ENCODE measurements at regions of chr2 and their contacts with region 1.

Region 1: DNA sequence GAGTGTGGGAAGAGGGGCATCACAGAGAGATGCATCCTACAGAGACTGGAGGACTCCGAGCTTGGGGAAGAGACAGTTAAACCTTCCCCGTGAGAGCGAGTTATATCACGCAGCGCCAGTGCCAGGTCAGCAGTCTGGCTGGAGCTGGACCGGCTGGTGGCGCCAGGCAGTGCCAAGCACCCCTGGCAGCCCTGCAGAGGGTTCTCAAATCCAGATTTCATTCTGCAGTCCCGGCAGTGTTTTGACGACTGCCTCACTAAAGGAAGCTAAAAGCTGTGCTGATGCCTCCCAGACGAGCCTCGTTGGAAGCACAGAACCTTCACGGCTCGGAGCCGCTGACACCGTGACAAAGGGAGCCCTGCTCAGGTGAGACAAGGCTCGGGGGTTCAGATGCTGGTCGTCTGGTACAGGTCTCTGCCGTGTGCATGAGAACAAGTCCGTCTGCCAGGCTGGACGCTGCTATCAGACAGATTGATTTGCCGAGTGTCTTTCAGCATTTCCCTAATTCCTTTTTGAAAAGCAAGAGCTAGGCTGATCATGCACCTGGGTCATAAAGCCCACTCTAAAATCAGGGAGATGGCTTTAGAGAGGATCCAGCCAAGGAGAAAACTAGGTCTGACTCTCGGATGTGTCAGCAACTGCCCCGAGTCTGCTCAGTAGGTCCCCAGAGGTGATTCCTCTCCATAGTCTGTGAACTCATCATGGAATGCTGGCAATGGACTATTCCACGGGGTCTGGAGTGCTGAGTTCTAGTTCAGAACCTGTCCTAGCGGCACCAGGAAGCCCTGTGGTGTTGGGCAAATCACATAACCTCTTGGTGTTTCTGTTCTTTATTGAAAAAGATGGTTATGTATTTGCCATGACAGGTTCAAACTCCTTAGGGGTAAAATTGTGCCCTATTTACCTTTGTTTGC is 240.6 kb downstream of the SOX11 start:
- DNase-seq: no peak
- H3K4me3 ChIP-seq: no peak overlapping the region
- H3K4me3 Mint-ChIP-seq: no peak overlapping the region
- H3K27ac Mint-ChIP-seq: no peak overlapping the region
- H3K4me1 ChIP-seq: no peaks in the 10 kb centered on the region
- H3K4me1 Mint-ChIP-seq: peaks cover 12% of the 10 kb centered on the region
- H3K27me3 ChIP-seq: no peaks in the 10 kb centered on the region
- H3K27me3 Mint-ChIP-seq: no peaks in the 10 kb centered on the region
- CTCF ChIP-seq: no peak

Region 2: GRCh38 chr2:5618271-5618670 is 314.5 kb before region 1 on chr2:
- CTCF ChIA-PET with region 1: no interaction called
- POLR2A ChIA-PET with region 1: no interaction called
- intact Hi-C with region 1: no loop called
- DNase-seq: no peak
- H3K4me3 ChIP-seq: no peak overlapping the region
- H3K4me3 Mint-ChIP-seq: no peak overlapping the region
- H3K27ac Mint-ChIP-seq: no peak overlapping the region
- H3K4me1 ChIP-seq: no peaks in the 10 kb centered on the region
- H3K4me1 Mint-ChIP-seq: no peaks in the 10 kb centered on the region
- H3K27me3 ChIP-seq: no peaks in the 10 kb centered on the region; the same call in 1 of the 2 replicates
- H3K27me3 Mint-ChIP-seq: peaks cover 8% of the 10 kb centered on the region
- CTCF ChIP-seq: no peak

Region 3: DNA sequence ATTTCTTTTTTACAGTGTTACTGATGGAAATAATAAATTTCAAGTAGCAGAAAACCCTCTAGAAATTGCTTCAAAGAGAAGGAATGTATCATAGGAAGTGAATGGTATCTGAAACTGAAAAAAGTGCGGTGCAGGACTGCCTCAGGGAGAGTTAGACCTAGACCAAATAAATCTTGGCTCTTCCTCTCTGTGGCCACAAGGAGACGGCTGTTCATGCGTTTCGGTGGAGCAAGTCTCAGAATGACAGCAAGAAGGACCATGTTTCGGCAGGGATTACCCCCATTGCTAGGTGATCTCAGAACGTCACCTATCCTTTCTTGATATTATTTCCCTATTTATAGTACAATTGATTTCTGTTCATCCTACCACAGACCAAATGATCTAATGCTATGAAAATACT is 281.7 kb after region 1 on chr2:
- CTCF ChIA-PET with region 1: no interaction called
- POLR2A ChIA-PET with region 1: no interaction called
- intact Hi-C with region 1: loop called (anchors 10 kb)
- DNase-seq: no peak
- H3K4me3 ChIP-seq: no peak overlapping the region
- H3K4me3 Mint-ChIP-seq: no peak overlapping the region
- H3K27ac Mint-ChIP-seq: no peak overlapping the region
- H3K4me1 ChIP-seq: peaks cover 10% of the 10 kb centered on the region; the same call in 1 of the 2 replicates
- H3K4me1 Mint-ChIP-seq: peaks cover 6% of the 10 kb centered on the region
- H3K27me3 ChIP-seq: no peaks in the 10 kb centered on the region
- H3K27me3 Mint-ChIP-seq: no peaks in the 10 kb centered on the region
- CTCF ChIP-seq: no peak

Region 4: GRCh38 chr2:6482256-6482655 is 549.4 kb after region 1 on chr2:
- CTCF ChIA-PET with region 1: no interaction called
- POLR2A ChIA-PET with region 1: no interaction called
- intact Hi-C with region 1: no loop called
- DNase-seq: no peak
- H3K4me3 ChIP-seq: no peak overlapping the region
- H3K4me3 Mint-ChIP-seq: no peak overlapping the region
- H3K27ac Mint-ChIP-seq: no peak overlapping the region
- H3K4me1 ChIP-seq: no peaks in the 10 kb centered on the region
- H3K4me1 Mint-ChIP-seq: no peaks in the 10 kb centered on the region
- H3K27me3 ChIP-seq: no peaks in the 10 kb centered on the region
- H3K27me3 Mint-ChIP-seq: no peaks in the 10 kb centered on the region
- CTCF ChIP-seq: no peak